PC-9 (cell line): ENCODE measurements at regions of chrX and their contacts with region 1.

Region 1: DNA sequence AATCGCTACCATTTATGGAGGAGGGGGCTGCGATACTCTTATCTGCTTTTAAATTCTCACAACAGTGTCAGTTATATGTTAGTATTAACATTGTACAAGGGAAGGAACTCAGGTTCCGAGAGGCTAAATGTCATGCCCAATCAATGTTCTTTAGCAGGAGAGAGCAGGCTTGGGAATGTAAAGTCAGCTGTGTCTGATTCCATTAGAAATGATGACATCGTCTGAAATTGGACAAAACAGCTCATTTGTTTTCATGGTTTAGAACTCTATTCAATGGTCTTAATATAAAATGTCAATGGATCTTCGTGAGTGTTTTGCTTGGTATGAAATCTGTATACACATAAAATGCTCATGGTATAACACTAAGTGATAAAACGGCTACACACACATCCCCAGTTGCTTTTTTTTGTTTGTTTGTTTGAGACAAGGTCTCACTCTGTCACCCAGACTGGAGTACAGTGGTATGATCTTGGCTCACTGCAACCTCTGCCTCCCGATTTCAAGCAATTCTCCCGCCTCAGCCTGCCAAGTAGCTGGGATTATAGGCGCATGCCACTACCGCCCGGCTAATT is 11.9 kb upstream of the SH3KBP1 start:
- DNase-seq: no peak
- H3K4me3 ChIP-seq: no peak overlapping the region
- H3K27ac ChIP-seq: no peak overlapping the region
- H3K4me1 ChIP-seq: peaks cover 2% of the 10 kb centered on the region
- H3K27me3 ChIP-seq: no peaks in the 10 kb centered on the region
- CTCF ChIP-seq: no peak

Region 2: DNA sequence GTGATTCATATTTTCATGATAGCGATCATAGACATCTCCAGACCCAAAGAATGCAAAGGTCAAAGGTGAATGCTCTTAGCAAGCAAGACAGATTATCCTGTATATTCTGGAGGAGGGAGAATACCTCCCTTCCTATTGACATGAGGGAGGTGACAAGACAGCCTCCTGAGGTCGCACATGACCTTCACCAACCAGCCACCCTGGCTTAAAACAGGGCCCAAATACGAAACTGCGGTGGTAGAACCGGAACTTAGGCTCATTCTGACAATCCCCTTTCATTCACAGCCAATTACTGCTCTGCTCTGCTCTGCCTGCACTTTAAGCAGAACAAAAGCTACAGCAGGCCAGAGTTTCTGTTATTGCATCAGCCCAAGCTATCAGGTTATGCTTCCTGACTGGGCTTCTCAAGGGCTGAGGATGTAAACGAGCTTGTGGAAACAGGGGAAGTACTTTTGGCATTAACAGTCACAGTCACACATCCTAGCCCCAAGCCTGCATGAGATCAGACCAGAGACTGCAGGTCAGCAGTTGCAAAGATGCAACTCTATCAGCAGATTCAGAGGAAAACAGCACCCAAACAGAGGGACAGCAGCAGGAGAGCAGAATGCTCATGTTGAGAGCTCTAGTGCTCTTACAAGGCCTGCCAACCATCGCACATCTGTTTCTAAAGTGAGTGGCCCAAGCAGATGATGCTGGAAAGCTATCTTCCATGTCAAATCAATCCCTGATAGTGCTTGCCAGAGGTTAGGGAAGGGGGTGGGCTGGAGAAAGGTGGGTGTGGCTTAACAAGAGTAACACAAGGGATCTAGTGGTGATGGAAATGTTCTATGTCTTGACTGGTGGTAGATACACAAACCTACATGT is 332.7 kb before region 1 on chrX:
- CTCF ChIA-PET with region 1: interaction called, 14 read pairs
- POLR2A ChIA-PET with region 1: no interaction called
- intact Hi-C with region 1: no loop called
- DNase-seq: no peak
- H3K4me3 ChIP-seq: no peak overlapping the region
- H3K27ac ChIP-seq: peak overlapping the region; percentile 53; the same call in 1 of the 2 replicates
- H3K4me1 ChIP-seq: no peaks in the 10 kb centered on the region
- H3K27me3 ChIP-seq: no peaks in the 10 kb centered on the region
- CTCF ChIP-seq: no peak